ENCODE measurements at regions of chr10 and their contacts with region 1.

Region 1: DNA sequence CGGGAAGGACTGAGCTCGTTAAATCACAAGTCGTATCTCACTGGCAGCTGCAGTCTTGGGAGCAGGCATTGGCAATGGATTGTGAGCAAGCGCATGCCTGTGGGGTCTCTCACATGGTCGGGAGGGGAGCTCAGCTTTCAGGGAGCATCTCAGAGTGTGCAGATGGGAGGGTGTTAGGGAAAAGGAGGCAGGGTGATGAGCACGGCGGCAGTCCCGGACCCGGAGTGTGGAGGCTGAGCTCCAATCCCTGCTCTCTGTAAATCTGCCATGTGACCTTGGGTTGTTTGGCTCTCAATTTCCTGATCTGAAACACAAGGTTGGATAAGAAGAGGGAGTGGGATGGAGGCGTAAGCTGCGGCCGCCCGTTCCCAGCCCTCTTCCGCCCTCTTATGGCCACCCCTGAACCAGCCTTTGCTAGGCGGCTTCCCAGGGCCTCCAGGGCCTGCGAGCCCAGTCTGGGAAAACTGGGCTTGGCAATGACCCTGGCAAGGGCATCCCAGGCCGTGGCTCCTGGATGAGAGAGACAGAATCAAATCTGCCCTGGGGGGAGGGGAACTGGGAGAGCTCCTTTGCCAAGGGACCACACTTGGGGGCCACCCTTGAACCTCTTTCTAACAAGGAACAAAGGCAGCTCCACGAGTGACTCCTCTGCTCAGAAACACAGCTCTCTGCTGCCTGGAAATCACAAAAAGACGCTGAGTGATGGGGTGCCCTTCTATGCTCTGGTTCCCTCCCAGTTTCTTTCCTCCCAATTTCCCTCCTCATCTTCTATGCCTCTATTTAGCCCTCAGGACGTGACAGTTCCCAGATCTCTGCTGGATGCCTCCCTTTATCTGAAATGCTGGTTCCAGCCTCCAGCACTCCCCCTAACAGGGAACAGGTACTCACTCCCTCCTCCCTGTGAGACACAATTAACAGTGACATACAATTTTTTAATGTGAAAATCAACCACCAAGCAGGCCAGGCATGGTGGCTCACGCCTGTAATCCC is 41.7 kb upstream of the LOXL4 start:
- DNase-seq: peak; percentile 55
- H3K4me3 ChIP-seq: no peak overlapping the region
- H3K27me3 ChIP-seq: 0 out of 2 replicates have a peak, but pooled peaks cover 1% of the 10 kb centered on the region
- CTCF ChIP-seq: peak; percentile 97

Region 2: GRCh38 chr10:98170249-98171117 is 139.2 kb before region 1 on chr10:
- CTCF ChIA-PET with region 1: interaction called, 79 read pairs
- POLR2A ChIA-PET with region 1: no interaction called
- DNase-seq: no peak
- H3K4me3 ChIP-seq: no peak overlapping the region
- H3K27me3 ChIP-seq: no peaks in the 10 kb centered on the region
- CTCF ChIP-seq: peak; percentile 80

Region 3: DNA sequence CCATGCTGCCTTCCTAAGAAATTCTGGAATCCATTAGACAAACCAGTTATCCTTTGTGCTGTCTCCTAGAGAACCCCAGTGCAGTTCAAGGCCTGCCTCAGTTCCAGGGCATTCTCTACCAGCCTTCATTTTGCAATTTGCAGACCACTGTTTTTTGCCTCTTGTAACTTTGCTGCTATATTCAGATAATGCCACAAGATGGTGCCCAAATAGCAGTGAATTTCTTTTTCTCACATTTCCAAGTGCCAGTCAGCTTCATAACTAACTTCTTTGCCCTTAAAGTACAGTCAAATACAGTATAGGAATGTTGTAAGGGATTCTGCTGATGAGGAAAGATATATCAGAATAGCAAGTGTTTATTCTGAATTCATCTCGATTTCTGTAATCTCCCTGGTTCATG is 66.8 kb before region 1 on chr10:
- CTCF ChIA-PET with region 1: interaction called, 64 read pairs
- POLR2A ChIA-PET with region 1: no interaction called
- DNase-seq: no peak
- H3K4me3 ChIP-seq: no peak overlapping the region
- H3K27me3 ChIP-seq: no peaks in the 10 kb centered on the region
- CTCF ChIP-seq: peak; percentile 57

Region 4: DNA sequence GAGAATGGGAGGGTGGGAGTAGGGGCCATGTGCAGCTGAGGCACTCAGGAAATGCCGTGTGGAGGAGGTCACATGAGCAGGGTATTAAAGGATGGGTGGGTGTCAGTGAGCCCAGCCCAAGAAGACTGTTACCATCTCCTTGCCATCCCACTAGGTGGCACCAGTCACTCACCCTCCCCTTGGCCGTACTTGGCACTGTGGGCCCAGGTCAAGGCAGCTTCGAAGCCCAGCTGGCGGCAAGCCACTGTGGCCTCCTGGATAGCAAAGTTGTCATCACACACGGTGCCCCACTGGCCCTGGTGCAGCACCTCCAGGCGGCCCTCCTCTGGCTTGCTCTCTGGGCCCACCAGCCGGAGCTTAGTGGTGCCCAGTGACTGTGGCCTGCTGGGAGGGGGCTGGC is 47.1 kb before region 1 on chr10:
- CTCF ChIA-PET with region 1: interaction called, 47 read pairs
- POLR2A ChIA-PET with region 1: no interaction called
- DNase-seq: no peak
- H3K4me3 ChIP-seq: no peak overlapping the region
- H3K27me3 ChIP-seq: no peaks in the 10 kb centered on the region
- CTCF ChIP-seq: peak; percentile 58

Region 5: GRCh38 chr10:98285416-98285815 is 24.2 kb before region 1 on chr10:
- CTCF ChIA-PET with region 1: interaction called, 13 read pairs
- POLR2A ChIA-PET with region 1: no interaction called
- DNase-seq: no peak
- H3K4me3 ChIP-seq: no peak overlapping the region
- H3K27me3 ChIP-seq: peaks cover 13% of the 10 kb centered on the region
- CTCF ChIP-seq: no peak

Region 6: GRCh38 chr10:98323221-98324164 is 13.8 kb after region 1 on chr10:
- CTCF ChIA-PET with region 1: interaction called, 19 read pairs
- POLR2A ChIA-PET with region 1: no interaction called
- DNase-seq: peak; percentile 99
- H3K4me3 ChIP-seq: no peak overlapping the region
- H3K27me3 ChIP-seq: no peaks in the 10 kb centered on the region
- CTCF ChIP-seq: no peak

Measured in BJ (cell line).